ENCODE measurements at regions of chr2 and their contacts with region 1.

Region 1: DNA sequence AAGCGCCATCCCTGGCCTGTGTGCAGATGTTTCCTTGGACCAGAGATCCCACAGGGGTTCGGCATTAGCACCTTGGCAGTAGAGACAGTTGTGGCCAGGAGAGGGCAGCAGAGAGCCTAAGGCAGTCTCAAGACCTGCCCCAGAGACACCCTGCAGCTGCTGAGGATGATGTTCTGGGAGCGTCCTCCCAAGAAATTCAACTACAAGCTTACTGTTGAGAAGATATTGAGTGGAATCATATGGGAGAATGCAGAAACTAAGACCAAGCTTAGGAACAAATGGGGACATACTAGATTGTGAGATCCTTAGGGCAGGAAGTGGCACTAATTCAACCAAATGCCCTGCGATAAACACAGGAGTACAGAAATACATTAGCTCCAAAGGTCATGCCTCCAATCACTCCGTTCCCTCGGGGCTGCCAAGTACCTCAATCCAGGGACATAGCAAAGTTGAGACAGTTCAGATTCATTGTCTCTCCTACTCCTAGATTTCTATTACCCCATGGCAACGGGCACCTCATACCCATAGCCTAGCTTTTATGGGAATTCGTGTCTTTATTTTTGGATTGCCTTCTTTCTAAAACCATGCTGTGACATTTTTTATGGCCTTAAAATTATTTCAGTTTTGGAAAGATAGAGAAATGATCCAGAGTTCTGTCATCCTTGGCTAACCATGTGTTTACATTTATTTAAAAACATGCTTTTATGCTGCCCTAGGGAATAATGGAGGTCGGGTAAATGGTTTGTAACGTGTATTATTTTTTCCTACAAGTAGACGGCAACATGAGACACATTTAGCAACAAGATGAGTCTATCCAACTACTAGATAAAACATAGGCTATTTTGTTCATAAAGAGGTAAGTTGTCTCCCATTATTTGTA is 2.2 kb upstream of the ERMN start:
- DNase-seq: peak; percentile 80 to 92
- H3K4me3 ChIP-seq: no peak overlapping the region
- H3K27ac ChIP-seq: no peak overlapping the region
- H3K4me1 ChIP-seq: peaks cover 0 to 9% (median 8%) of the 10 kb centered on the region in 4 experiments; a peak in 5 of 7 replicates
- H3K27me3 ChIP-seq: no peaks in the 10 kb centered on the region
- CTCF ChIP-seq: peak; percentile 93 to 97 (median 94)
- EP300 ChIP-seq: no peak
- POLR2A ChIP-seq: no peak
- RAD21 ChIP-seq: peak; percentile 81 to 87

Region 2: DNA sequence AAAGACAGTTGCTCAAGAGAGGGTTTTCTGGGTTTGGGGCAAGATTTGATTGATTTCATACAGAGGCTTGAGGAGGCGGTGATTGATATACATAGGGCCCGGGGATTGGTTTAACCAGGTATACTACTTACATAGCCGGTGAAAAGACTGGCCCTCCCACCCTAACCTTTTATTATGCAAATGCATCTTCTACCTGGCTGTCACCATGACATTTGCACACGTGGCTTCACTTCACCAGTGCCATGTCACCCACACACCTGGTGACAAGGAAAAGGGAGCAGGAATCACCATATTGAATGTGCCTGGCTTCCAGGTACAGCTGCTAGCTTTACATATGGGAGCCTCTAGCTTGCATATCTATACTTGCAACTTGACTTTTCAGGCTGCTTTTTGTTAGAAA is 12.0 kb before region 1 on chr2:
- CTCF ChIA-PET with region 1: interaction called, 13 read pairs
- POLR2A ChIA-PET with region 1: no interaction called
- DNase-seq: no peak
- H3K4me3 ChIP-seq: no peak overlapping the region
- H3K27ac ChIP-seq: no peak overlapping the region
- H3K4me1 ChIP-seq: peaks cover 0 to 3% (median 1%) of the 10 kb centered on the region in 4 experiments; a peak in 2 of 7 replicates
- H3K27me3 ChIP-seq: no peaks in the 10 kb centered on the region
- CTCF ChIP-seq: no peak
- EP300 ChIP-seq: no peak
- POLR2A ChIP-seq: no peak
- RAD21 ChIP-seq: no peak

Region 3: DNA sequence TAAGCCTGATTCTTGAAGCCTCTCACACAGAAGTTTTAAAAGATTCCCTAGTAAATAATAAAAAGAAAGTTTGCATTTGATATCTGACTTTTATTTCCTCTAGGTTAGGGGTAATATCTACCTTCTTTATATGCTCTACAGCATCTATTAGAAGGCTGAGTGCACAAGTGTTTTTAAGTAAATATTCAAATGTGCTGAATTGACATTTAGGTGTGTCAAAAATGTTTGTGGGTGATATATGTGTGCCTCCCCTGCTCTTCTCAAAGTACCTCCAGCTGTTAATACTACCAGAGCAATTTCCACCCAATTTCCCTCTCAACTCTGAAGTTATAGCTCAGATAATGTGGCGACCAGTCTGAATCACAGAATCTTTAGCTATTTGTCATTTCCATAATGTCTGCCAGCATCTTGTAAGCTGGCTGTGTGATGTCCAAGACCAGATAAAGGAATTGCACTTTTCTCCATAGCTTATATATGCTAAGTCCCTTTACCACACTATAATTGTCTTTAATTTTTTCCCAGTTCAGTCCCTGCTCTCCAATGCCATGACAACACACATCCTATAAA is 22.2 kb after region 1 on chr2:
- CTCF ChIA-PET with region 1: interaction called, 47 read pairs
- POLR2A ChIA-PET with region 1: interaction called, 3 read pairs
- DNase-seq: no peak
- H3K4me3 ChIP-seq: no peak overlapping the region
- H3K27ac ChIP-seq: no peak overlapping the region
- H3K4me1 ChIP-seq: peaks cover 0 to 10% (median 0%) of the 10 kb centered on the region in 4 experiments; a peak in 2 of 7 replicates
- H3K27me3 ChIP-seq: no peaks in the 10 kb centered on the region
- CTCF ChIP-seq: no peak
- EP300 ChIP-seq: no peak
- POLR2A ChIP-seq: no peak
- RAD21 ChIP-seq: no peak

Region 4: DNA sequence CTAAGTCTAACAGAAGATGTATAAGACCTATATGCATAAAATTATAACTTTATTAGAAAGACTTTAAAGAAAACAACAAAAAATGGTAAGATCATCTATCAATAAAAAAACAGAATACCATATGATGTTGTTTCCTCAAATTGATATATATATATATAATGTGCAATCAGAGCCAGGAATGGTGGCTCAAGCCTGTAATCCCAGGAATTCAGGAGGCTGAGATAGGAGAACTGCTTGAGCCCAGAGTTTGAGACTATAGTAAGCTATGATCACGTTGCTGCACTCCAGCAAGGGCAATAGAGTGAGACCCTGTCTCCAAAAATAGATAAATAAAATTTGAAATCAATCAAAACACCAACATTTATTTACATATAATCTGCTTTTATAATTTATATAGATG is 96.5 kb after region 1 on chr2:
- CTCF ChIA-PET with region 1: no interaction called
- POLR2A ChIA-PET with region 1: no interaction called
- DNase-seq: no peak
- H3K4me3 ChIP-seq: no peak overlapping the region
- H3K27ac ChIP-seq: no peak overlapping the region
- H3K4me1 ChIP-seq: no peaks in the 10 kb centered on the region
- H3K27me3 ChIP-seq: no peaks in the 10 kb centered on the region
- CTCF ChIP-seq: no peak
- EP300 ChIP-seq: no peak
- POLR2A ChIP-seq: no peak
- RAD21 ChIP-seq: no peak

Region 5: DNA sequence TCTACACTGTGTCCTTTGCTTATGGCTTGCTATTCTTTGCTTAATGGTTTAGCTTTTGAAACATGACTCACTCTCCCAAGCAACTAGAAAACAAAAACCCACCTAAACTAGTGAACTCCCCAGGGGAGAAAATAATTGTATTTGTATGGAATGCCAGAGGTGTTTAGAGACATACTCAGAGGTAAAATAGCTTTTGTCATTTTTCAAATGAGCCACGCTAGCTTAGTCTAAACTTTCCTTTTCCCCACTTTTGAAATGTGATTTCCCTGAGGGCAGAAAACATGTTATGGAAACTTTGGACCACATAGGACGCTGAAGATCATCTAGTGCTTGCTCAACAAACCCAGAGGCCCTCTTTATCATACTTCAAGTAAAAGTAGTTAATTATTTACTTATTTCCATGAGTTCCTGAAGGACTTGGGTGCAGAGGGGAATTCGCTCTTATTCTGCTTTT is 132.6 kb after region 1 on chr2:
- CTCF ChIA-PET with region 1: interaction called, 21 read pairs
- POLR2A ChIA-PET with region 1: no interaction called
- DNase-seq: no peak
- H3K4me3 ChIP-seq: no peak overlapping the region
- H3K27ac ChIP-seq: no peak overlapping the region
- H3K4me1 ChIP-seq: peaks cover 0 to 8% (median 1%) of the 10 kb centered on the region in 4 experiments; a peak in 2 of 7 replicates
- H3K27me3 ChIP-seq: no peaks in the 10 kb centered on the region
- CTCF ChIP-seq: no peak
- EP300 ChIP-seq: no peak
- POLR2A ChIP-seq: no peak
- RAD21 ChIP-seq: no peak

Region 6: GRCh38 chr2:157492189-157492773 is 164.4 kb after region 1 on chr2:
- CTCF ChIA-PET with region 1: interaction called, 15 read pairs
- POLR2A ChIA-PET with region 1: no interaction called
- DNase-seq: peak; percentile 23 to 71
- H3K4me3 ChIP-seq: no peak overlapping the region
- H3K27ac ChIP-seq: no peak overlapping the region
- H3K4me1 ChIP-seq: no peaks in the 10 kb centered on the region
- H3K27me3 ChIP-seq: no peaks in the 10 kb centered on the region
- CTCF ChIP-seq: peak; percentile 71 to 90 (median 86)
- EP300 ChIP-seq: no peak
- POLR2A ChIP-seq: no peak
- RAD21 ChIP-seq: peak; percentile 96 to 98

Measured in H1 (cell line).